HEK293 (cell line): ENCODE measurements at regions of chr2 and their contacts with region 1.

Region 1: DNA sequence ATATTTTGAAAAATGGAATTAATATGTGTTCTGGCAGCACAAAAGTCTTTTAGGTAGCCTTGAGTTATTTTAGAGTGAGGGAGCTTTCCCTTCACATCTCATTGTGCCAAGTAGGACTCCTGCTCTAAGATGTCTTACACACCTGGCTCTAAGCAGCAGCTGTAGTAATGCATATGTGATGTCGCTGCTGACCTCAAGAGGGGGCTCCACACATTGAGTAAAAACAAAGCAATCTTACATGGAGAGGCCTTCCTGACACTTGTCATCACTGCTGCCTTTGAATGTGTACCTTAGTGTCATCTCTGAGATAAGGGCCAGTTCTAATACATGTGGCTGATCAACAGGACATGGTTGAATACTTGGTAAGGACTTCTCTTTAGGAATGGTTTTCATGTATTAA is 75.8 kb downstream of the ACTR3 start:
- H3K4me3 ChIP-seq: no peak overlapping the region
- H3K27ac ChIP-seq: no peak overlapping the region
- H3K4me1 ChIP-seq: peaks cover 3% of the 10 kb centered on the region; the same call in 1 of the 2 replicates
- CTCF ChIP-seq: no peak

Region 2: GRCh38 chr2:113977660-113978523 is 12.2 kb after region 1 on chr2:
- CTCF ChIA-PET with region 1: interaction called, 17 read pairs
- POLR2A ChIA-PET with region 1: no interaction called
- H3K4me3 ChIP-seq: no peak overlapping the region
- H3K27ac ChIP-seq: no peak overlapping the region
- H3K4me1 ChIP-seq: no peaks in the 10 kb centered on the region
- CTCF ChIP-seq: 0 out of 2 replicates have a peak, but pooled peaks have one; percentile 37